ENCODE measurements at regions of chr10 and their contacts with region 1.

Region 1: GRCh38 chr10:60032723-60033122 is 126.4 kb upstream of the CCDC6 start:
- DNase-seq: peak; percentile 62
- H3K4me3 ChIP-seq: no peak overlapping the region
- H3K27ac ChIP-seq: no peak overlapping the region
- H3K4me1 ChIP-seq: no peaks in the 10 kb centered on the region
- CTCF ChIP-seq: peak; percentile 87

Region 2: DNA sequence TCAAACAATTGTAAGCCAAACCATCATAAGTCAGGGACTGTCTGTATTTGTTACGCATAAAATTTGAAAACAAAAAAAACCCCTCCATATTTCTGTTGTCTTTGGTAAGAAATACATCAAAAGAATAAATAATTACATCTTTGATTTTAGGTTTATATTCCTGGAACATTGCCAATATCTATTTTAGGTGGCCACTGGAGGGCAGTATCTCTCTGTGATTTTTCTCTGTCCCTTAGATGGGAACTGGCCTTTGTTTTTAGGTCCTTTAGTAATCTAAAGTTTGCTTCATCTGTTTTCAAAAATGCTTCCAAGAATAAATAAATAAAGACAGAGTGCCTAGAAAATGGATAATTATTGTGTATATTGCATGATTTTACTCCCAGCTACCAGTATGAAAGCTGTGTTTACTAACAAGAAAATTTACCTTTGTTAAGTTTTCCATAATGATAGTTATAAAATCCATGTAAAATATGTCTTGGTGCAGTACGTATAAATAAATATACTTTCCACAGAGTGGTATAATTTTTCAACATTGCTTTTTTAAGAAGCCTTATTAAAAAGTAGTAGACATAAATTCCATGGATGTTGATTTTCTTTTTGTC is 792.0 kb before region 1 on chr10:
- CTCF ChIA-PET with region 1: no interaction called
- POLR2A ChIA-PET with region 1: no interaction called
- intact Hi-C with region 1: loop called (anchors 10 kb)
- DNase-seq: peak; percentile 16
- H3K4me3 ChIP-seq: no peak overlapping the region
- H3K27ac ChIP-seq: no peak overlapping the region
- H3K4me1 ChIP-seq: no peaks in the 10 kb centered on the region
- CTCF ChIP-seq: peak; percentile 84

Region 3: GRCh38 chr10:59830601-59831259 is 202.0 kb before region 1 on chr10:
- CTCF ChIA-PET with region 1: no interaction called
- POLR2A ChIA-PET with region 1: no interaction called
- intact Hi-C with region 1: loop called (anchors 5 kb)
- DNase-seq: peak; percentile 53
- H3K4me3 ChIP-seq: no peak overlapping the region
- H3K27ac ChIP-seq: no peak overlapping the region
- H3K4me1 ChIP-seq: peaks cover 39% of the 10 kb centered on the region
- CTCF ChIP-seq: peak; percentile 89

Region 4: GRCh38 chr10:59865101-59865500 is 167.6 kb before region 1 on chr10:
- CTCF ChIA-PET with region 1: no interaction called
- POLR2A ChIA-PET with region 1: no interaction called
- intact Hi-C with region 1: loop called (anchors 1 kb)
- DNase-seq: peak; percentile 35
- H3K4me3 ChIP-seq: no peak overlapping the region
- H3K27ac ChIP-seq: no peak overlapping the region
- H3K4me1 ChIP-seq: peaks cover 5% of the 10 kb centered on the region
- CTCF ChIP-seq: peak; percentile 75

Measured in OCI-LY7 (cell line).